Activated CD4-positive, alpha-beta memory T cell treated with anti-CD3 and anti-CD28 coated beads for 36 hours (primary cell): ENCODE measurements at regions of chr7 and their contacts with region 1.

Region 1: DNA sequence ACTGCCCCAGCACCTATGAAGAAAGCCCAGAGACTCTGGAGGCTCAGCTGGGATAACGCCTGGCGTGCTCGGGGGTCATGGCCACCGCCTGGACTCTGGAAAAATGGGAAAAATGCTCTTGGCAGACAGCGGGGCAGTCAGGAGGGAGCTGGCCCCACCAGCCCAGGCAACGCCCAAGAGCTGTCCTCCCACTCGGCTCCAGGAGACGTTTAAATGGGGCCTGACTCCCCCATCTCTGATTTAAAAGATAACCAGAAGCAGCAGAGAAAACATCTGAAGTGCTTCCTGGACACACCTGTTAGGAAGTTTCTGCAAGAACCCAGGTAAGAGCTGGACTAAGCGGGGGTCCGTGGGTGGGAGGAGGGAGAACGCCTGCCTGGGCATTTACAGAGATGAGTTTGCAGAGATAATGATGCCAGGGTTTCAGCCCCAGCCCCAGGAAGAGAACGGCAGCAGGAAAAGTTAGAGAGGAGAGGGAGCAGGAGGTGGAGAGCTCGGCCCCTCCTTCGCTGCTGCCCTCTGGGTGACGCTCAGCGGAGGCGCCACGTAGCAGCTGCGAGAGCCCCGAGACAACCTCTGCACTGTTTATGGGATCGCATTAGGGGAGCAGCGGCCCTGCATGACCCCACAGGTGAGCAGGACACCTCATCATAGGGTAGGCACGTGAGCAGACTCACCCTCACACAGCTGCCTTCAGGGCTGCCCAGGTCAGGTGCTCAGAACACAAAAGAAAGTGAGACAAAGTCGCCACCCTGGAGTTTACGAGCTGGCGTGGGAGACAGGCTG is 83.5 kb upstream of the INSIG1 start:
- DNase-seq: no peak
- H3K4me3 Mint-ChIP-seq: no peak overlapping the region
- H3K27ac Mint-ChIP-seq: no peak overlapping the region
- H3K4me1 Mint-ChIP-seq: peaks cover 29% of the 10 kb centered on the region
- H3K27me3 Mint-ChIP-seq: peaks cover 5% of the 10 kb centered on the region

Region 2: GRCh38 chr7:155190688-155191087 is 23.5 kb before region 1 on chr7:
- CTCF ChIA-PET with region 1: interaction called, 13 read pairs
- POLR2A ChIA-PET with region 1: no interaction called
- intact Hi-C with region 1: loop called (anchors 1 kb)
- DNase-seq: peak; percentile 76
- H3K4me3 Mint-ChIP-seq: no peak overlapping the region
- H3K27ac Mint-ChIP-seq: no peak overlapping the region
- H3K4me1 Mint-ChIP-seq: peaks cover 28% of the 10 kb centered on the region
- H3K27me3 Mint-ChIP-seq: peaks cover 4% of the 10 kb centered on the region

Region 3: GRCh38 chr7:155283565-155284194 is 69.5 kb after region 1 on chr7:
- CTCF ChIA-PET with region 1: no interaction called
- POLR2A ChIA-PET with region 1: no interaction called
- intact Hi-C with region 1: loop called (anchors 1 kb)
- DNase-seq: peak; percentile 61
- H3K4me3 Mint-ChIP-seq: no peak overlapping the region
- H3K27ac Mint-ChIP-seq: peak overlapping the region; percentile 58
- H3K4me1 Mint-ChIP-seq: peaks cover 44% of the 10 kb centered on the region
- H3K27me3 Mint-ChIP-seq: peaks cover 24% of the 10 kb centered on the region